ENCODE measurements at regions of chr21 and their contacts with region 1.

Region 1: GRCh38 chr21:38733973-38734546 is 71.7 kb upstream of the ETS2 start:
- DNase-seq: peak; percentile 85 to 92 (median 87)
- H3K4me3 ChIP-seq: peak overlapping the region; percentile 45 to 53 (median 53)
- H3K27ac ChIP-seq: peak overlapping the region; percentile 68 to 85
- H3K4me1 ChIP-seq: peaks cover 0 to 2% (median 0%) of the 10 kb centered on the region in 3 donors
- H3K27me3 ChIP-seq: no peaks in the 10 kb centered on the region
- CTCF ChIP-seq: peak; percentile 97

Region 2: GRCh38 chr21:38610623-38611251 is 123.3 kb before region 1 on chr21:
- intact Hi-C with region 1: no loop called
- DNase-seq: no peak
- H3K4me3 ChIP-seq: no peak overlapping the region
- H3K27ac ChIP-seq: no peak overlapping the region
- H3K4me1 ChIP-seq: no peaks in the 10 kb centered on the region
- H3K27me3 ChIP-seq: no peaks in the 10 kb centered on the region
- CTCF ChIP-seq: no peak

Region 3: GRCh38 chr21:39132248-39132647 is 398.2 kb after region 1 on chr21:
- intact Hi-C with region 1: loop called (anchors 5 kb)
- DNase-seq: no peak
- H3K4me3 ChIP-seq: no peak overlapping the region
- H3K27ac ChIP-seq: no peak overlapping the region
- H3K4me1 ChIP-seq: no peaks in the 10 kb centered on the region
- H3K27me3 ChIP-seq: no peaks in the 10 kb centered on the region
- CTCF ChIP-seq: no peak